Esophagus muscularis mucosa (tissue), 4 donors: ENCODE measurements at regions of chr4 and their contacts with region 1.

Region 1: GRCh38 chr4:94621491-94622080 is 136.2 kb upstream of the BMPR1B start:
- DNase-seq: no peak
- H3K4me3 ChIP-seq: no peak overlapping the region
- H3K27ac ChIP-seq: no peak overlapping the region
- H3K4me1 ChIP-seq: peaks cover 3 to 29% (median 18%) of the 10 kb centered on the region in 4 donors
- H3K27me3 ChIP-seq: no peaks in the 10 kb centered on the region
- CTCF ChIP-seq: peak; percentile 67 to 85 (median 81)
- EP300 ChIP-seq: no peak
- POLR2A ChIP-seq: no peak

Region 2: DNA sequence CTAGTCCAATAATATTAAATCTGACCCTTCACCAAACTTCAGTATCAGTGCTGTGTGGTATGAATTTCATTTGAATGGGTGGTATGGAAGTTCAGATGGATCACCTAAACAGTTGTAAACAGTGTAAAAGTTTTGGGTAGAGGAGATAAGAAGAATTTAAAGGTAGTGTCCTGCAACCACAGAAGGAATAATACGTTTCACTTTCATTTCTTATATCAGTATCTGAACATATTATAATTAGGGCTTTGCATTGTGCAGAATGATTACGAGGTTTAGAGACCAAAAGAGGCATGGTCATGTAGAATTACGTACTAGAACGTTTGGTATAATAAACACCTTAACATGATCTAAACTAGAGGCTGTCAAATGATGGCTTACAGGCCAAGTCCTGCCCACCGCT is 53.8 kb before region 1 on chr4:
- intact Hi-C with region 1: no loop called
- DNase-seq: no peak
- H3K4me3 ChIP-seq: no peak overlapping the region
- H3K27ac ChIP-seq: no peak overlapping the region
- H3K4me1 ChIP-seq: peaks cover 46 to 65% (median 47%) of the 10 kb centered on the region in 4 donors
- H3K27me3 ChIP-seq: no peaks in the 10 kb centered on the region
- CTCF ChIP-seq: no peak
- EP300 ChIP-seq: no peak
- POLR2A ChIP-seq: no peak

Region 3: DNA sequence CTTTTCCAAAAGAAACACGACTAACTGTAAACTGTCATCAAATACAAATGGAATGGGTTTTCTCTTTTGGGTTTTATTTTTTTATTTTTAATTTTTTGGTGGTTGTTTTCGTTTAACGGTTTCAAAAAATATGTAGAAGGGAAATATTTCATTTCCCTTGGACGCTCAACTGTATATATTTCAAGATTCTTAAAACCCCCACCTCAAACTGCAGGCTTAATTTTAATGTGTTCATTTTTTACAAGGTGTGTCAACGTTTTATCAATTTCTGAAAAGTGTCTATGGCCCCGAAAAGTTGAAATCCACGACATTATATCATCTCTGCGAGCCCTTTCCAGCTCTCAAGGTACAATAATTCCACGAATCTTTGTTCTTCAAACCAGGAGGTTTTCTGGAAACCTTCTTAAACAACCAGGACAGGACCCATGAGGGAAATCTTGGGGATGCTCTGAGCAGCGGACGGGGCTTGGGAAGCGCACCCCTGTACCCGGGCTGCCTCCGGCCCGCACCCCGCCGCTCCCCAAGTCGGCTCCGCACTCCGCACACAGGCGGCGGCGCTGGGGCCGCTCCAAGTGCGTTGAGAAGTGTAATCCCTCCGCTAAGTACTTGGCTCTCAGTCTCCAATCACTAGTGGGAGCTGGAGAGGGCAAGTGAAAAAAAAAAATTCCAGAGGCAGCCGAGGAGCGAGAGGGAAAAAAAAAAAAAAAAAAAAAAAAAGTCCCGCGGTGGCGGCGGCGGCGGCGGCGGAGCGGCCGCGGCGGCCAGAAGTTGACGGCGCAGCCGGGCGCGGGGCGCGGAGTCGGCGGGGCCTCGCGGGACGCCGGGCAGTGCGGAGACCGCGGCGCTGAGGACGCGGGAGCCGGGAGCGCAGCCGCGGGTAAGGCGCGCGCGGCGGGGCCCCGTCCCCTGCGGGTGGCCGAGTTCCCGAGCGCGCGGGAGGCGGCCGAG is 135.9 kb after region 1 on chr4 and contains the start of gene BMPR1B:
- intact Hi-C with region 1: loop called (anchors 10 kb)
- DNase-seq: no peak
- H3K4me3 ChIP-seq: peak within 1 kb of the TSS; percentile 74 to 94 (median 78)
- H3K27ac ChIP-seq: peak within 1 kb of the TSS; percentile 83 to 93 (median 92)
- H3K4me1 ChIP-seq: peaks cover 5 to 32% (median 28%) of the 10 kb centered on the region in 4 donors
- H3K27me3 ChIP-seq: peaks cover 0 to 6% (median 0%) of the 10 kb centered on the region in 4 donors
- CTCF ChIP-seq: no peak
- EP300 ChIP-seq: no peak
- POLR2A ChIP-seq: no peak
- total RNA-seq, gene BMPR1B: 11.3 to 22.0 (median 17.6) TPM

Region 4: DNA sequence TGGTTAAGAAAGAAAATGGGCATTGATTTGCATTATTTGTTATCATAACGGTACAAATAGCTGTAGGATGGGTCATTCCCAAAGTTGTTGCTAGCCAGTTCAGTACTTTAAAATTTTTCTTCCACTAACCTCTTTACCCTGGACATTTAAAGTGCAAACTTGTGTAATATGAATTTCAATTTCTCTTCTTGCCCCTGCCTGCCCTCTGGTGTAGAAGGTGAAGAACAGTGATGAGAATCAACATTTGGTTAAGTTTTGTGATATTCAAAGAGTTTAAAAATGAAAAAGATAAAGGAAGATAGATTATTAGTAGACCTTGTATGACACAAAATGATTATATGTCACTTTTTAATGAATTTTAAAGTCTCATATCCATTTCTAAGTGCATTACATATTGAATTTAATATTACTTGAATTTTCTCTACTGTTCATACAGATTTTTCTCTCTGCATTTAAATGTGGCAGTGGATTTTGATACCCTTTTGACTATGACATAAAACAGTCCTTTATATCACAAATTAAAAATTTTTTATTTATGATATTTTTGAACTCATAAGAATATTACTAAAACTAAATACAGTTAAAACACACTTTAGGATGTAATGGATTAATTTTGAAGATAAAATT is 473.9 kb after region 1 on chr4:
- intact Hi-C with region 1: loop called (anchors 5 kb)
- DNase-seq: no peak
- H3K4me3 ChIP-seq: no peak overlapping the region
- H3K27ac ChIP-seq: no peak overlapping the region
- H3K4me1 ChIP-seq: peaks cover 0 to 26% (median 10%) of the 10 kb centered on the region in 4 donors
- H3K27me3 ChIP-seq: no peaks in the 10 kb centered on the region
- CTCF ChIP-seq: peak; percentile 59 to 65 (median 64)
- EP300 ChIP-seq: no peak
- POLR2A ChIP-seq: no peak

Region 5: DNA sequence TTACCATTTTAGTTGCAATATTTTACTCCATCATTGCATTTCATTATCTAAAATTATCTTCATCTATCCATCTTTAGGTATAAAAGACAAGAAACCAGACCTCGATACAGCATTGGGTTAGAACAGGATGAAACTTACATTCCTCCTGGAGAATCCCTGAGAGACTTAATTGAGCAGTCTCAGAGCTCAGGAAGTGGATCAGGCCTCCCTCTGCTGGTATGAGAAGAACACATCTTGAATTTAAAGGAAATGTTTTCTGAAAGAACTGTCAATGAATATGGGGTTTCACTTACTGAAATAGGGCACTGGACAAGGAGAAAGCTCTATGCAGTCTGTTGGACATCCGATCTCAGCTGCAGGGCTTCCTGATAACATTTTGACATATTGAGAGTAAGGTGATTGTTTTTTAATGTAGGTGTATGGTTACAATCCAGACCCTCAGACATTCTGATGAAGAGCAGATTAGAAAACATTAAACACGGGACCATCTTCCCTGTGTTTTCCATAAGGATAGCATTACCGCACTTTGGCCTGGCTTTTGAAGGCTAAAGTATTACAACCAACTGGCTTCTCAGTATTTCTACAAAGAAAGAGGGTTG is 503.4 kb after region 1 on chr4:
- intact Hi-C with region 1: loop called (anchors 10 kb)
- DNase-seq: no peak
- H3K4me3 ChIP-seq: no peak overlapping the region
- H3K27ac ChIP-seq: no peak overlapping the region
- H3K4me1 ChIP-seq: peaks cover 0 to 6% (median 2%) of the 10 kb centered on the region in 4 donors
- H3K27me3 ChIP-seq: no peaks in the 10 kb centered on the region
- CTCF ChIP-seq: peak; percentile 37 to 54 (median 38)
- EP300 ChIP-seq: no peak
- POLR2A ChIP-seq: no peak